WTC11 (cell line): ENCODE measurements at regions of chr1 and their contacts with region 1.

Region 1: DNA sequence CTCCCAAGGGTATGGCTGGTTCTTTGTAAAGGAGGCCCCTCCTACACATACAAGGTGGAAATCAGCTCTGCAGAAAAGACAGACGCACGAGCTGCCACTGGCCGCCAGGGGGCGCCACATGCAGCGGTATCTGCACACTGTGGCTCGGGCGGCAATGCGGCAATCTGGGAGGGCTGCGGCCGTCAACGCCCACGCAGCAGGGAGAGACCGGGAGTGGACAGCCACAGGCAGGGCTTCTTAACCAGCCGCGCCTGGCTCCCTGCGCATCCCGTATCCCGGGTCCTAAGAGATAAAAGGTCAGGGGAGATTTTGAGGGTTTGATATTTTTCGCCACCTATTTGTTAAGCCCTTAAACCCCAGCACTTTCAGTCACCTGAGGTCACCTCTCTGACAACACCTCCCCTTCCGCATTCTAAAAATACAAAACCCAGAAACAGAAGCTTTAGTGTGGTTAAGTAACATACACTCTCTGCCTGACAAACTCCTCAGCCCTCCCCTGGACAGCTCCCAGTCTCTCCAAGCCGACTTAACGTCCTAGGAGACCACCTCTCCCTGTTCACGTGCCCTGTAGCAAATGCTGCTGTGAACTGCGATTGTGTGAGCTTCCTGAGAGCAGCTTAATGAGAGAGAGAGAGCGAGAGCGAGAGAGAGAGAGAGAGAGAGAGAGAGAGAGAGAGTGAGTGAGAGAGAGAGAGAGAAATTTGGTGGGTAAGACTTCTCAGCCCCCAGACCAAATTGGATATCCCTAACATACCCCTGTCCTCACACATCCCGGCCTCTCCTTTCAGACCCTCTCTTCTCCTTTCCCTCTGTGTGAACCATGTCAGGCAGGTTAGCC is 13.5 kb upstream of the KCNA2 start:
- DNase-seq: peak; percentile 89
- ATAC-seq: peak; percentile 85
- H3K4me3 Mint-ChIP-seq: peak overlapping the region; percentile 59
- H3K27ac Mint-ChIP-seq: no peak overlapping the region
- H3K4me1 Mint-ChIP-seq: peaks cover 6% of the 10 kb centered on the region; the same call in 1 of the 2 replicates
- H3K27me3 Mint-ChIP-seq: peaks cover 39% of the 10 kb centered on the region
- CTCF ChIP-seq: peak; percentile 97

Region 2: GRCh38 chr1:110554871-110555801 is 64.5 kb before region 1 on chr1:
- CTCF ChIA-PET with region 1: interaction called, 27 read pairs
- POLR2A ChIA-PET with region 1: no interaction called
- DNase-seq: peak; percentile 73
- ATAC-seq: peak; percentile 88
- H3K4me3 Mint-ChIP-seq: peak overlapping the region; percentile 66
- H3K27ac Mint-ChIP-seq: no peak overlapping the region
- H3K4me1 Mint-ChIP-seq: peaks cover 8% of the 10 kb centered on the region
- H3K27me3 Mint-ChIP-seq: peaks cover 65% of the 10 kb centered on the region
- CTCF ChIP-seq: peak; percentile 59

Region 3: DNA sequence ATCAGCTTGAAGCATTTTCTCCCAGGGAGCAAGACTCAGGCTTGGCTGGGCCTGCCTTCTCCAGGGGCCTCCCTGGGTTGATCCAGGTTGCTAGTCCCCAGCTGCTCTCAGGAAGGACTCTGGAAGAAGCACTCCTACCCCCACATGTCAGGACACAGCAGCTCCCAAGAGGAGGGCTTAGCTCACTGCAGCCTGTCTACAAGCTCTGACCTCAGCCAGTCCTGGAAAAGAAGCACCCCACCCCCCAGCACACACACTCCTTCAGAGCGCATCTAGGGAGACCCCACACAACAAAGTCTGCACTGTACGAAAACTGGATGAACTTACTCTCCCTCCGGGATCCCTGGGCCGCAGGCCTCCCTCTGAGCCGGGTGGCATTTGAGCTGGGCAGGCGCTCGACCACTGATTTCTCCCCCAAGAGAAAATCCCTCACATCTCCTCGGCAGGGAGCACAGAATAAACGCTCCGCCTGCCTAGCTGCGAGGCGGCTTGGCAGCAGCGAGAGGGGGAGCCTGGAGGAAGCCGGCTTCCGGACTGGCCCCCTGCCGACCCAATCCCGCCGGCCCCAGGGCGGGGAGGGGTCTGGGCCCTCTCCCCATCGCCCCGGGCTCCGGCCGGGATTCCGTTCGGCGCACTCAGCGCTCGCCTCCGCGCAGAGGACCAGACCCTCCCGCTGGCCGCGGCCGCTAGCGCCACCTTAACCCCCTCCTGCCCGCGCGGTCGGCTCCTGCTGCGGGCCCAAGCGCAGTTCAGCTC is 13.6 kb before region 1 on chr1 and contains the start of gene KCNA2:
- CTCF ChIA-PET with region 1: interaction called, 51 read pairs
- POLR2A ChIA-PET with region 1: no interaction called
- DNase-seq: peak; percentile 68
- ATAC-seq: peak; percentile 71
- H3K4me3 Mint-ChIP-seq: peak within 1 kb of the TSS; percentile 79
- H3K27ac Mint-ChIP-seq: no peak within 1 kb of the TSS
- H3K4me1 Mint-ChIP-seq: peaks cover 15% of the 10 kb centered on the region
- H3K27me3 Mint-ChIP-seq: peaks cover 79% of the 10 kb centered on the region
- CTCF ChIP-seq: no peak
- total RNA-seq, gene KCNA2: 0.41 to 0.87 TPM (median 0.50 TPM) in 3 replicates

Region 4: GRCh38 chr1:110766025-110766647 is 146.5 kb after region 1 on chr1:
- CTCF ChIA-PET with region 1: interaction called, 42 read pairs
- POLR2A ChIA-PET with region 1: no interaction called
- DNase-seq: no peak
- ATAC-seq: peak; percentile 26; the same call in 1 of the 2 replicates
- H3K4me3 Mint-ChIP-seq: peak overlapping the region; percentile 14; the same call in 1 of the 2 replicates
- H3K27ac Mint-ChIP-seq: no peak overlapping the region
- H3K4me1 Mint-ChIP-seq: peaks cover 3% of the 10 kb centered on the region; the same call in 1 of the 2 replicates
- H3K27me3 Mint-ChIP-seq: peaks cover 15% of the 10 kb centered on the region
- CTCF ChIP-seq: peak; percentile 73

Region 5: DNA sequence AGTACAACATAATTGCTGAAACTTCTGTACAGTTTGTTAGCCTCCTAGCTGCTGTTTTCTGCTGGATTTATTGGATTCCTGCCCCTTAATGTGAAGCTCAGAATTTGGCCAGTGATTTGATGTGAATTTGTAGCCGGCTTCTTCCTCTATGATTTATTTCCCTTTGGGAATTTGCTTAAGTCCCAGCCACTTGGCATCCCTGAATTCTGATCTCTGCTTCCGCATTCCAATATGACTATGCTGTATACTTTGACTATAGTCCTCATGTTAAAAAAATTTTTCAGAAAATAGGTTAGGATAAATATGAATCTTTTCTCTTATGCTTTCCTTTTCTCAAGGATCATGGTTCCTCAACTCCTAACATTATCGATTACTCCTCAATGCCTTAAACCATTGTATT is 356.5 kb after region 1 on chr1:
- CTCF ChIA-PET with region 1: no interaction called
- POLR2A ChIA-PET with region 1: no interaction called
- DNase-seq: no peak
- ATAC-seq: no peak
- H3K4me3 Mint-ChIP-seq: no peak overlapping the region
- H3K27ac Mint-ChIP-seq: no peak overlapping the region
- H3K4me1 Mint-ChIP-seq: no peaks in the 10 kb centered on the region
- H3K27me3 Mint-ChIP-seq: peaks cover 52% of the 10 kb centered on the region
- CTCF ChIP-seq: no peak

Region 6: GRCh38 chr1:111015225-111015624 is 395.6 kb after region 1 on chr1:
- CTCF ChIA-PET with region 1: no interaction called
- POLR2A ChIA-PET with region 1: no interaction called
- DNase-seq: no peak
- ATAC-seq: 0 out of 2 replicates have a peak, but pooled peaks have one; percentile 26
- H3K4me3 Mint-ChIP-seq: no peak overlapping the region
- H3K27ac Mint-ChIP-seq: no peak overlapping the region
- H3K4me1 Mint-ChIP-seq: no peaks in the 10 kb centered on the region
- H3K27me3 Mint-ChIP-seq: peaks cover 2% of the 10 kb centered on the region; the same call in 1 of the 2 replicates
- CTCF ChIP-seq: no peak